Right lobe of liver (tissue), 6 donors: ENCODE measurements at regions of chr22 and their contacts with region 1.

Region 1: GRCh38 chr22:41237707-41238569 is 2.8 kb downstream of the CHADL start:
- DNase-seq: peak; percentile 88 to 92 (median 91)
- ATAC-seq: peak; percentile 87 to 92 (median 92)
- H3K4me3 ChIP-seq: peak overlapping the region; percentile 35 to 62 (median 46)
- H3K27ac ChIP-seq: peak overlapping the region in 1 of 3 donors; percentile 49
- H3K4me1 ChIP-seq: peaks cover 0 to 25% (median 8%) of the 10 kb centered on the region in 4 donors
- H3K27me3 ChIP-seq: no peaks in the 10 kb centered on the region
- CTCF ChIP-seq: peak; percentile 73 to 89 (median 78)
- POLR2A ChIP-seq: peak; percentile 35

Region 2: GRCh38 chr22:40922484-40923303 is 315.2 kb before region 1 on chr22:
- intact Hi-C with region 1: loop called in 1 of 2 experiments (anchors 10 kb)
- DNase-seq: no peak
- ATAC-seq: peak; percentile 72 to 85 (median 82)
- H3K4me3 ChIP-seq: no peak overlapping the region
- H3K27ac ChIP-seq: no peak overlapping the region
- H3K4me1 ChIP-seq: peaks cover 0 to 5% (median 0%) of the 10 kb centered on the region in 4 donors
- H3K27me3 ChIP-seq: no peaks in the 10 kb centered on the region
- CTCF ChIP-seq: peak; percentile 72 to 77 (median 74)
- POLR2A ChIP-seq: no peak

Region 3: DNA sequence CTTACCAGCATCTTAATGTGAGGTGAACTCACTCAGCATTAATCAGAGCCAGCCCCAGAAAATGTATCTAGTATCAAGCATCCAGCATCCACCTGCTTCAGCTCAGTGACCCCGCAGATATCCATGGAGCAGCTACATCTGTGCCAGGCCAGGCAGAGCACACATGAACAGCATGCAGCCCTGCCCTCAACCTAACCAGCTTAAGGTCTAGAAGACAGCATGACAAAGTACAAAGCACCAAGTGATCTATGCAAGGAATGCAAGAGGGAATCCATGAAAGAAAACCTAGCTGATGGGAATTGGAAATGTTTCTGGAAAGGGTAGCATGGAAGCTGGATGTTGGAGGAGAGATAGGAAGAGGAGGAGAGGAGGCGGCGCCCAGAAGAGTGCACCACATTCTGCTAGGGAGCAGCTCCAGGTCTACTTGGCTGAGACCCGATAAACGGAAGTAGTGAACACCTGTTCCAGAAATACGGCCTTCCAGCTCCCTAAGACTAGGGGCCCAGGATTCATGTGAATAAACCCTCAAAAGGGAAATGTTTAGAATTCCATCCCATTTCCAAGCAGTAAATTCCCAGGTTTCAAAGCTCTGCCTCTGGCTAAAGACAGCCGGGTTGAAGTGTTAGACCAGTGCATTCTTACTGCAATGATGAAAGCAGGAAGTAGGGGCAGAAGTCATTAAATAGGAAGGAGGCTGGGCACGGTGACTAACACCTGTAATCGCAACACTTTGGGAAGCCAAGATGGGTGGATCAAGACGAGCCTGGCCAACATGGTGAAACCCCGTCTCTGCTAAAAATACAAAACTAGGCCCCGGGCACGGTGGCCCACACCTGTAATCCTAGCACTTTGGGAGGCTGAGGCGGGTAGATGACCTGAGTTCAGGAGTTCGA is 56.3 kb before region 1 on chr22:
- intact Hi-C with region 1: loop called in 1 of 2 experiments (anchors 10 kb)
- DNase-seq: no peak
- ATAC-seq: peak in 3 of 4 donors; percentile 8 to 41 (median 22)
- H3K4me3 ChIP-seq: no peak overlapping the region
- H3K27ac ChIP-seq: no peak overlapping the region
- H3K4me1 ChIP-seq: no peaks in the 10 kb centered on the region
- H3K27me3 ChIP-seq: no peaks in the 10 kb centered on the region
- CTCF ChIP-seq: no peak
- POLR2A ChIP-seq: no peak

Region 4: DNA sequence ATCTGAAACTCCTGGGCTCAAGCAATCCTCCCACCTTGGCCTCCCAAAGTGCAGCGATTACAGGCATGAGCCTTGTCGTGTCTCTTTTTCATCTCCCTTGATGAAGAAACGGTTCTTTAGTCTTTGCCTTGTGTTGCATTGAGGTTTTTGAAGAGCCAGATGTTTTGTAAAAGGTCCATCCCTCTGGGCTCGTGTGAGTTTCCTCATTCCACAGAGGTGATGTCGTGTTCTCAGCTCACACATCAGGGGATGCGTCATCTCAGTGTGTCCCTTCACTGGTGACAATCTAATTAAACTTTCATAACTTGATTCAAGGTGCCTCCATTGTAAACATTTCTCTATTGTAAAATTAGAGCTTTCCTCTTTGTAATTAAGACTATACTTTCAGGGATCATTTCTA is 114.1 kb after region 1 on chr22:
- intact Hi-C with region 1: no loop called
- DNase-seq: no peak
- ATAC-seq: peak in 1 of 4 donors; percentile 29
- H3K4me3 ChIP-seq: no peak overlapping the region
- H3K27ac ChIP-seq: no peak overlapping the region
- H3K4me1 ChIP-seq: peaks cover 0 to 13% (median 7%) of the 10 kb centered on the region in 4 donors
- H3K27me3 ChIP-seq: no peaks in the 10 kb centered on the region
- CTCF ChIP-seq: no peak
- POLR2A ChIP-seq: no peak